ENCODE measurements at regions of chr6 and their contacts with region 1.

Region 1: DNA sequence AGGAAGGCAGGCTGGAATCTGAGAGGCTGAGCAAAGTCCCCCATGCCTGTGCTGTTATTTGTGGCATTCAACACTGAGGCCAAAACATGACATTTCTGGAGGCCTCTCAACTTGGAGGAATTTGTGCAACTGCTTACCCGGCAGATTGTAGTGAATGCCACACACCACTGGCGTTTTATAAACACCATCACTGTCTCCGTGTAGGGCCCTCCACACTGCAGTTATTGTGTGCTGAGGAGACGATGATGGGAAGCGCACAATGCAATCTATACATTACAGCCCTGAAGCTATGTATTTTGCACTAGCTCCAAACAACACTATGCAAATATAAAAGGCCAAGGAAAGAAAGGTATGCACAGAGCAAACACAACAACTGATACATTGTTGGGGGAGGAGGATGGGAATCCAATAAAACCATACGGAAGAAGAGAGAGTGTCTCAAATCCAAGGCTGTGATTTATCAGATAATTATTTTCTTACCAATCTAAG is 106.5 kb downstream of the SMLR1 start:
- DNase-seq: peak; percentile 15
- ATAC-seq: peak; percentile 96
- H3K4me3 ChIP-seq: peak overlapping the region in 1 of 2 experiments; percentile 44; a peak in 2 of 4 replicates
- H3K27ac ChIP-seq: peak overlapping the region; percentile 94
- H3K4me1 ChIP-seq: peaks cover 74% of the 10 kb centered on the region
- H3K27me3 ChIP-seq: no peaks in the 10 kb centered on the region
- CTCF ChIP-seq: no peak

Region 2: GRCh38 chr6:131029626-131030297 is 96.0 kb after region 1 on chr6:
- CTCF ChIA-PET with region 1: interaction called, 11 read pairs
- POLR2A ChIA-PET with region 1: no interaction called
- in situ Hi-C with region 1: no loop called
- intact Hi-C with region 1: no loop called
- DNase-seq: no peak
- ATAC-seq: peak; percentile 72
- H3K4me3 ChIP-seq: no peak overlapping the region
- H3K27ac ChIP-seq: peak overlapping the region; percentile 52
- H3K4me1 ChIP-seq: peaks cover 29% of the 10 kb centered on the region
- H3K27me3 ChIP-seq: no peaks in the 10 kb centered on the region
- CTCF ChIP-seq: no peak

Region 3: GRCh38 chr6:131063028-131063763 is 129.4 kb after region 1 on chr6 and contains the start of gene EPB41L2:
- CTCF ChIA-PET with region 1: no interaction called
- POLR2A ChIA-PET with region 1: no interaction called
- in situ Hi-C with region 1: no loop called
- intact Hi-C with region 1: loop called (anchors 10 kb)
- DNase-seq: no peak
- ATAC-seq: peak; percentile 92
- H3K4me3 ChIP-seq: peak within 1 kb of the TSS; percentile 83 to 89
- H3K27ac ChIP-seq: peak within 1 kb of the TSS; percentile 93
- H3K4me1 ChIP-seq: peaks cover 27% of the 10 kb centered on the region
- H3K27me3 ChIP-seq: no peaks in the 10 kb centered on the region
- CTCF ChIP-seq: 0 out of 2 replicates have a peak, but pooled peaks have one; percentile 4
- total RNA-seq, gene EPB41L2: 199 TPM